IMR-90 (cell line): ENCODE measurements at regions of chr2 and their contacts with region 1.

Region 1: GRCh38 chr2:239075918-239076758 is 228.3 kb downstream of the TWIST2 start:
- DNase-seq: no peak
- ATAC-seq: no peak
- H3K4me3 ChIP-seq: no peak overlapping the region
- H3K27ac ChIP-seq: no peak overlapping the region
- H3K4me1 ChIP-seq: no peaks in the 10 kb centered on the region
- H3K27me3 ChIP-seq: no peaks in the 10 kb centered on the region
- CTCF ChIP-seq: no peak
- POLR2A ChIP-seq: no peak
- RAD21 ChIP-seq: no peak

Region 2: DNA sequence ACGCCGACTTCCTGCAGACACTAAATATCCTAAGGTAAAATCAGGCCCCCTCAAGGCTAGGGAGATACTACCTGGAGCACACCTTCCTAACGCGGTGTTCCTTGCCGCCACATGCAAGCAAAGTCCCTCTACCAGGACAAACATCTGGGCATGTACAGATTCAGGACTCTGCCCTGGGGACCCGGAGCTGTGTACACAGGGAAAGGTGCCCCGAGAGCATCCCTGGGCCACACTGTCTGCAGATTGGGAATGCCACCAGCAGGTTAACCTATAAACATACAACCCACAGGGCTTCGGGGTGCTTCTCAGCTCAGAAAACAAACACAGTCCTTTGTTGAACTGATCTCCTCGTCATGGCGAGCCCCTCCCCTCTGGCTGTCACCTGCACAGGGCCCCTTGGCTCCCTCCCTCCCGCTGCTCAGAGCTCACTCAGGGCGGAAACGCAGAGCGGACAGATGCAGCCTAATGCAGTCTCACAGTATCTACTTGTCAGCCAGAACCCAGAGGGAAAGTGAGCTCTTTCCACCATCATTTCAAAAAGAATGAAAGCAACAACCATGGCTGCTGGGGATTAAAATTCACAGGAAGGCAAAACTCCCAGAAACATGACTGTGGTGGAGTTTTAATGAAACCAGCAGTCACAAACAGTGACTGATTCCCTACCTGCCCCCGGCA is 105.9 kb after region 1 on chr2:
- CTCF ChIA-PET with region 1: no interaction called
- POLR2A ChIA-PET with region 1: interaction called, 22 read pairs
- dilution Hi-C with region 1: no loop called
- in situ Hi-C with region 1: no loop called
- intact Hi-C with region 1: no loop called
- DNase-seq: no peak
- ATAC-seq: no peak
- H3K4me3 ChIP-seq: no peak overlapping the region
- H3K27ac ChIP-seq: no peak overlapping the region
- H3K4me1 ChIP-seq: no peaks in the 10 kb centered on the region
- H3K27me3 ChIP-seq: no peaks in the 10 kb centered on the region
- CTCF ChIP-seq: no peak
- POLR2A ChIP-seq: no peak
- RAD21 ChIP-seq: no peak

Region 3: DNA sequence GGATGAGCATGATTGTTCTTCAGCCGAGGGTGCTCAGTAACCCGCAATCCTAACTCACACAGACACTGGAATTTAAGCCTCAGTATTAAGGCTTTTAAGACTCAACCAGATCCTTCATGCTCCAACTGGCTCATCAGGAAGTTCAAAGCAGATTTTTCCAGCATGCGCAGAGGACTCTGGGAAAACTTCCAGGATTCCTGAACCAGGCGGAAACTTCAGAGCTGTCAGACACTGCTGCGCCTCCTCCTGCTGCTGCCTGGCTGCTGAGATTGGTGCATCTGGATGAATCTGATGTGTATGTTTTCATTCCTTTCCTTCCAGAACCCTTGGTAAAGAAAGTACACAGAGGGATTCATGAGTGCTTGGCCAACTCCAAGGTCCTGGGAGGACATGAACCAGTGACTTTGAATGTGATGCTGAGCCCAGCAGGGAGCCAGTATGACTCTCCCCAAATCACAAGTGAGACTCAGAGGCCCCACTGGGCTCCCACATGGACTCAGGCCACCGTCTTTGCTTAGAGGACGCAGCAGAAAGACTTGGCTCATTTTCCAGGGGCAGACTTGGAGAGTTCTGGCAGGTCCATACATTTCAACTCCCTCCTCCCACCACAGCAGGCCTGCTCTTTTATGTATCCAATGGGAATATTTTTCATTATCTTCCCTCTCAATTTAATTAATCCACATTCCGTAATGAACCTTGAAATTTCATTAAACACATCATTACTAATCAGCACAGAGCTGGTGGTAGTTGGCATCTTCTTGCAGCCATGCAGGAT is 468.2 kb after region 1 on chr2:
- CTCF ChIA-PET with region 1: no interaction called
- POLR2A ChIA-PET with region 1: no interaction called
- dilution Hi-C with region 1: no loop called
- in situ Hi-C with region 1: no loop called
- intact Hi-C with region 1: no loop called
- DNase-seq: no peak
- ATAC-seq: no peak
- H3K4me3 ChIP-seq: no peak overlapping the region
- H3K27ac ChIP-seq: no peak overlapping the region
- H3K4me1 ChIP-seq: no peaks in the 10 kb centered on the region
- H3K27me3 ChIP-seq: no peaks in the 10 kb centered on the region
- CTCF ChIP-seq: no peak
- POLR2A ChIP-seq: no peak
- RAD21 ChIP-seq: no peak